Activated naive CD4-positive, alpha-beta T cell treated with anti-CD3 and anti-CD28 coated beads, Interleukin-2, amount 10 ng/mL, durations not matched to agents 7 days and 5 days (primary cell): ENCODE measurements at regions of chr17 and their contacts with region 1.

Region 1: GRCh38 chr17:50853015-50853615 is 13.0 kb downstream of the TOB1 start:
- DNase-seq: no peak
- H3K4me3 Mint-ChIP-seq: peak overlapping the region; percentile 42
- H3K27ac Mint-ChIP-seq: no peak overlapping the region
- H3K4me1 Mint-ChIP-seq: peaks cover 25% of the 10 kb centered on the region
- H3K27me3 Mint-ChIP-seq: peaks cover 24% of the 10 kb centered on the region

Region 2: GRCh38 chr17:50783193-50783660 is 69.9 kb before region 1 on chr17:
- CTCF ChIA-PET with region 1: interaction called, 19 read pairs
- DNase-seq: peak; percentile 84
- H3K4me3 Mint-ChIP-seq: no peak overlapping the region
- H3K27ac Mint-ChIP-seq: no peak overlapping the region
- H3K4me1 Mint-ChIP-seq: peaks cover 33% of the 10 kb centered on the region
- H3K27me3 Mint-ChIP-seq: peaks cover 77% of the 10 kb centered on the region

Region 3: DNA sequence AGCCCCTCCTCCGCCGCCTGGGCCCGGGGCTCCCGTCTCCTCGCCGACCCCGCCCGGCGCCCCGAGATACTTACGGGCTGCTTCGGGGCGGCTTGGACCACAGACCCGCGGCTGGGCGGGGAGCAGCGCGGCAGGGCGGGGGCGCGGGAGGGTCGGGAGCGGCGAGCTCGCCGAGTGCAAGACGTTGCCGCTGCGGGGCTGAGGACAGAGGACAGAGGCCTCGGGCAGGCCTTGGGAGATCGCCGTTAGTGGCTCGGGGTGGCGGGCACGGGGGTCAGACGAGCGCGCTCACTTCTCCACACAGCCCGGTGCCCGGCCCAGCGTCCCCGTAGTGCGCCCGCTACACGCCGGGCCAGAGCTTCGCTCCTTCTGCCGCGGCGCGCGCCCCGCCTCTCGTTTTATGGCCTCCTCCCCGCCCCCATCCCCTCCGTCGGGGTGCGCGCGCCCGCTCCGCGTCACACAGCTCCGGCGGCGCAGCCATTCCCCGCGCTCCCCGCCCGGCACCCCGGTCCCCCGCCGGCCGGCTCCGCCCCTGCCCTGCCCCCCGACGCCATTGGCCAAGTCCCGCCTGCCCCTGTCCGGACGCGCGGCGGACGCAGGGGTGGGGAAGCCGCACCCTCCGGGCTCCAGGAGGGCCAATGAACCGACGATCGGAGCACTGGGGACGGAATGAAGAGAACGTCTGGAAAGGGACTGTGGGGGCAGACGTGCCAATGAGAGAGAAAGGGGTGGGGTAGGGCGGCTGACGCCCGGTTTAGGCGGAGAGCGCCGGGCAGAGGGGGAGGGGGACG is 13.1 kb after region 1 on chr17 and contains the start of gene TOB1:
- CTCF ChIA-PET with region 1: interaction called, 20 read pairs
- DNase-seq: peak; percentile 97
- H3K4me3 Mint-ChIP-seq: peak within 1 kb of the TSS; percentile 95
- H3K27ac Mint-ChIP-seq: peak within 1 kb of the TSS; percentile 98
- H3K4me1 Mint-ChIP-seq: peaks cover 54% of the 10 kb centered on the region
- H3K27me3 Mint-ChIP-seq: peaks cover 3% of the 10 kb centered on the region

Region 4: DNA sequence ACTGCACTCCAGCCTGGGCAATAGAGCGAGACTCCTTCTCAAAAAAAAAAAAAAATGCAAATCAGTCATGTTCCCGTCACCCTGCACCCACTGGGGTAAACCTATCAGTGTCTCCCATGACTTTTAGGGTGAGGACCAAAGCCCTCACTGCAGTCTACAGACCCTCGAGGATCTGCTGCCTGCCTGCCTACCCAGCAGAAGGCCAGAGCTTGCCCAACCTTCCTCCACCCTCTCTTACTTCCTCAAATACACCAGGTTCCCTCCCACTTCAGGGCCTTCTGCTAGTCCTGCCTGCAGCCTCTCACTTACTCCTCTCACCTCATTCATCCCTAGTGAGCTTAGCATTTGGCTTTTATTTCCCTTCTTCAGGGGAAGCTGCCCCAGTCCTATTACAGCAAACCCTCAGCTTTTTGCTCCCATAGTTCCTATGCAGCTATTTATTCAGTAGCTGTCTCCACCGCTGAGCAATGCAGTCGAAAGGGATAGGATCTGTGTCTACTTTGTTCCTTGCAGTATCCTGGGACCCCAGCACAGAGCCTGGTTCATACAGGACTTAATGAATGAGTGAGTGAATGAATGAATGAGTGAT is 30.8 kb after region 1 on chr17:
- CTCF ChIA-PET with region 1: no interaction called
- DNase-seq: no peak
- H3K4me3 Mint-ChIP-seq: no peak overlapping the region
- H3K27ac Mint-ChIP-seq: peak overlapping the region; percentile 35
- H3K4me1 Mint-ChIP-seq: peaks cover 44% of the 10 kb centered on the region
- H3K27me3 Mint-ChIP-seq: peaks cover 17% of the 10 kb centered on the region

Region 5: GRCh38 chr17:50949989-50950881 is 97.1 kb after region 1 on chr17:
- CTCF ChIA-PET with region 1: interaction called, 173 read pairs
- DNase-seq: peak; percentile 66
- H3K4me3 Mint-ChIP-seq: no peak overlapping the region
- H3K27ac Mint-ChIP-seq: no peak overlapping the region
- H3K4me1 Mint-ChIP-seq: peaks cover 53% of the 10 kb centered on the region
- H3K27me3 Mint-ChIP-seq: peaks cover 25% of the 10 kb centered on the region

Region 6: DNA sequence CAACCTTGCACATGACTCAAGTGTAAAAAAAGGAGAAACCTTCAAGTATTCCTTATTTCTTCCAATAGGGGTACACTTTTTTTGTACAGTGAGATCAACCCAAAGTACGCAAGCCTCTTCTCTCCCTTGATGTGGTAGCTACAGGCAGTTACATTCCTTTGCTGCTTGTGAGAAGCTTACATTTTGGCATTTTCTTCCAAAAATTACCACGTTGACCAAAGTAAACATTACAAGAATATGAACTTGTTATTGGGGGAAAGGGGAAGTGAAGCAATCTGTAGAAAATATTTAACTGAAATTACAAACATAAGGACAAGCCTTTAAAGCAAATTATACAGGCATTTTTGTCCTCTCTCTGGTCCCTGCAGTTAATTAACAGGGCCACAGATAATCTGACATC is 110.0 kb after region 1 on chr17:
- CTCF ChIA-PET with region 1: interaction called, 173 read pairs
- DNase-seq: no peak
- H3K4me3 Mint-ChIP-seq: no peak overlapping the region
- H3K27ac Mint-ChIP-seq: no peak overlapping the region
- H3K4me1 Mint-ChIP-seq: peaks cover 12% of the 10 kb centered on the region
- H3K27me3 Mint-ChIP-seq: no peaks in the 10 kb centered on the region

Region 7: DNA sequence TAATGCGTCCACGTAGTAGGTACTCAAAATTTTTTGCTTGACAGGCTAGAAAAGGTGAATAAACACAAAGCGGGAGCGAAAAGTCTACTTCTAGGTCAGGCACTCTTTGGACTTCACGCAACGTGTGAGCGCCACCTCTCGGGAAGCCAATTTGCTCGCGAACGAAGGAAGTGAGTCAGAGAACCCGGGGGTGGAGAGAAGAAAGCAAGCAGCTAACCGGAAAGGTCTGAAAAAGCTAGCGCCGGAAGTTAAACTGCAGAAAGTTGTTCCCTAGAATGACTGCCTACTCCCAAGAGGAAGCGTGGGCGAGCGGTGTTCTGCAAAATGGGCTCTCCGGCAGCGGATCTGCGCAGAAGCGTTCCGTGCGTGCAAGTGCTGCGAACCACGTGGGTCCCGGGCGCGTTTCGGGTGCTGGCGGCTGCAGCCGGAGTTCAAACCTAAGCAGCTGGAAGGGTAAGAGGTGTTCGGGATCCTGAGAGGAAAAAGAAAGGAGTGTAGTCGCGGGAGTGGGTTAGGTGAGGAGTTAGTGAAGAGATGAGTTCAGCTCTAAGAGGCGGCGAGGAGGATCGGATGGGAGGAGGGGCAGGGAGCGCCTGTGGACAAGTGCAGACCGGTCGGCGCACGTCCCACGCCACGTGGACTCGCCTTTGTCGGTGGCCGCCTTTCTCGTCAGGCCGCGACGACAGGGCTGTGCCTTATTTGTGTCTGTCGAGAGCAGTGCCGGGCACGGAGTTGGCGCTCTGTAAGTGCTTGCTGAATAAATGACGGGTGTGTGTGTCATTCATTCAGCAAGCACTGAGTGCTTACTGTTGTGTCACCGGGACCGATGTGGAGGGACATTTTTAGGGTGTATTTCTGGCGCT is 300.3 kb after region 1 on chr17 and contains the start of gene NME1:
- CTCF ChIA-PET with region 1: interaction called, 13 read pairs
- DNase-seq: peak; percentile 97
- H3K4me3 Mint-ChIP-seq: no peak within 1 kb of the TSS
- H3K27ac Mint-ChIP-seq: no peak within 1 kb of the TSS
- H3K4me1 Mint-ChIP-seq: peaks cover 6% of the 10 kb centered on the region
- H3K27me3 Mint-ChIP-seq: no peaks in the 10 kb centered on the region